ENCODE measurements at regions of chr12 and their contacts with region 1.

Region 1: DNA sequence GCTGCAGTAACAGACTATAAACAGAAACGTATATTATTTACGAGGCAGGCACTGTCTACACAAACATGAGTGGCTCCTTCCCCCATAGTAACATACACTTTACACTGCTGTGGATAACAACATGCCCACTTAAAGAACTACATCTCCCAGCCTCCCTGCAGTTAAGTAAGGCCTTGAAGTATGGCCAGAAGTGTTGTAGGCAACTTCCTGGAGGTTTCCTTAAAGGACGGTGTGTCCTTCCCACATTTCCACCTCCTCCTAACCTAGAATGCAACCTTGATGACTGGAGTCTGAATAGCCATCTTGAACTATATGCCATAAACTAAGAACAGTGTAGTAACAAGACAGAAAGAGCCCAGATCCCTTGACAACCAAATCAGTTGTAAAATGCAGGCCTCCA is 20.3 kb downstream of the MED13L start:
- DNase-seq: no peak
- H3K4me3 ChIP-seq: no peak overlapping the region
- H3K27ac ChIP-seq: peak overlapping the region; percentile 5 to 37
- H3K4me1 ChIP-seq: peaks cover 0 to 78% (median 28%) of the 10 kb centered on the region in 4 donors
- H3K27me3 ChIP-seq: no peaks in the 10 kb centered on the region
- CTCF ChIP-seq: no peak

Region 2: DNA sequence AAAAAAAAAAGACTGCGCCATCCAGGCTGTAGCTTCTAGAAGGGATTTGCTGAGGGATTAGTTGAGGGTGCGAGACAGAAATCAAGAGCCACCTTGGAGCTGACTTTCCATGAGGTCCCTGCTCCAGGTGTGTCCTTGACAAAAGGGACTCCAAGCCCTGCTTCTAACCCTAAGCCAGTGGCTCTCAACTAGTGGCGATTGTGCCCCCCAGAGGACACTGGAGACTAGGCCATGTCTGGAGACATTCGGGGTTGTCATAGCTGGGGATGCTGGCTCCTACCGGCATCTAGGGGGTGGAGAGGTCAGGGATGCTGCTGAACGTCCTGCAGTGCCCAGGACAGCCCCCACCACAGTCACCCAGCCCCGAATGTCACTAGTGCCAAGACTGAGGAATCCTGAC is 440.1 kb after region 1 on chr12:
- intact Hi-C with region 1: loop called (anchors 10 kb)
- DNase-seq: no peak
- H3K4me3 ChIP-seq: no peak overlapping the region
- H3K27ac ChIP-seq: no peak overlapping the region
- H3K4me1 ChIP-seq: peaks cover 0 to 8% (median 4%) of the 10 kb centered on the region in 4 donors
- H3K27me3 ChIP-seq: peaks cover 0 to 21% of the 10 kb centered on the region in 2 donors
- CTCF ChIP-seq: no peak

Measured in tibial artery (tissue), 4 donors.